ENCODE measurements at regions of chr16 and their contacts with region 1.

Region 1: GRCh38 chr16:30065143-30065850 is at the start of gene ALDOA:
- DNase-seq: peak; percentile 89 to 92
- H3K4me3 ChIP-seq: peak within 1 kb of the TSS; percentile 71 to 92 (median 88)
- H3K27ac ChIP-seq: peak within 1 kb of the TSS; percentile 84
- H3K4me1 ChIP-seq: peaks cover 6 to 27% (median 15%) of the 10 kb centered on the region in 4 experiments
- H3K27me3 ChIP-seq: no peaks in the 10 kb centered on the region
- CTCF ChIP-seq: no peak
- EP300 ChIP-seq: no peak; a peak in 1 of 3 replicates
- POLR2A ChIP-seq: peak; percentile 93 to 95
- RAD21 ChIP-seq: no peak
- total RNA-seq, gene ALDOA: 1,083 and 1,146 TPM in 2 replicates

Region 2: DNA sequence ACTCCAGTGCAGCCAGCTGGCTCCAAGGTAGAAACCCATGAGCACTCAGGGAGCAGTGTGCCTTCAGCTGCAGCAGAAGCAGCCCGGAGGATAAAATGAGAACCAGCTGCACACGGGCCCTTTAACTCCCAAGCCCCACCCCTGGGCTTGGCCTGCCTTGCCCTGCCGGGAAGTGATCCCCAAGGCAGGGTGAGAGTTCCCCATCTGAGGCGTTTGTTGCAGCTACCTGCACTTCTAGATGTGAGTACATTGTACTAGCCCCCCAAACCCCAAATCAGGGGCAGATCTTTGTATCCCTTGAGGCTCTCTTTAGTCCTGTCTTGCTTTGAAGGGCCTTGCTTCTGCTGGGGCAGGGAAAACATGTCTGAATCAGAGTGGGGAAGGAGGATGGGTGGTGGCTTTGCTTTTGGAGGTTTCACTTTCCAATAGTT is 245.0 kb before region 1 on chr16 and contains the start of gene MVP:
- CTCF ChIA-PET with region 1: no interaction called
- POLR2A ChIA-PET with region 1: no interaction called
- DNase-seq: peak in 1 of 2 experiments; percentile 39
- H3K4me3 ChIP-seq: no peak within 1 kb of the TSS; a peak in 1 of 8 replicates
- H3K27ac ChIP-seq: no peak within 1 kb of the TSS
- H3K4me1 ChIP-seq: peaks cover 0 to 7% (median 3%) of the 10 kb centered on the region in 4 experiments; a peak in 5 of 7 replicates
- H3K27me3 ChIP-seq: no peaks in the 10 kb centered on the region
- CTCF ChIP-seq: no peak
- EP300 ChIP-seq: no peak
- POLR2A ChIP-seq: no peak
- RAD21 ChIP-seq: no peak
- total RNA-seq, gene MVP: 1.9 and 2.9 TPM in 2 replicates

Region 3: GRCh38 chr16:30018731-30019158 is 46.6 kb before region 1 on chr16:
- CTCF ChIA-PET with region 1: no interaction called
- POLR2A ChIA-PET with region 1: no interaction called
- DNase-seq: no peak
- H3K4me3 ChIP-seq: no peak overlapping the region
- H3K27ac ChIP-seq: no peak overlapping the region
- H3K4me1 ChIP-seq: no peaks in the 10 kb centered on the region; a peak in 1 of 7 replicates
- H3K27me3 ChIP-seq: no peaks in the 10 kb centered on the region
- CTCF ChIP-seq: no peak
- EP300 ChIP-seq: no peak
- POLR2A ChIP-seq: no peak
- RAD21 ChIP-seq: no peak

Region 4: GRCh38 chr16:30052671-30053372 is 12.5 kb before region 1 on chr16:
- CTCF ChIA-PET with region 1: interaction called, 8 read pairs
- POLR2A ChIA-PET with region 1: interaction called, 88 read pairs
- DNase-seq: peak in 1 of 2 experiments; percentile 98
- H3K4me3 ChIP-seq: peak overlapping the region; percentile 68 to 80 (median 78)
- H3K27ac ChIP-seq: no peak overlapping the region
- H3K4me1 ChIP-seq: peaks cover 0 to 4% (median 2%) of the 10 kb centered on the region in 4 experiments; a peak in 3 of 7 replicates
- H3K27me3 ChIP-seq: peaks cover 0 to 5% (median 2%) of the 10 kb centered on the region in 4 experiments; a peak in 2 of 7 replicates
- CTCF ChIP-seq: no peak
- EP300 ChIP-seq: peak in 1 of 2 experiments; percentile 51; a peak in 1 of 3 replicates
- POLR2A ChIP-seq: no peak
- RAD21 ChIP-seq: no peak

Region 5: DNA sequence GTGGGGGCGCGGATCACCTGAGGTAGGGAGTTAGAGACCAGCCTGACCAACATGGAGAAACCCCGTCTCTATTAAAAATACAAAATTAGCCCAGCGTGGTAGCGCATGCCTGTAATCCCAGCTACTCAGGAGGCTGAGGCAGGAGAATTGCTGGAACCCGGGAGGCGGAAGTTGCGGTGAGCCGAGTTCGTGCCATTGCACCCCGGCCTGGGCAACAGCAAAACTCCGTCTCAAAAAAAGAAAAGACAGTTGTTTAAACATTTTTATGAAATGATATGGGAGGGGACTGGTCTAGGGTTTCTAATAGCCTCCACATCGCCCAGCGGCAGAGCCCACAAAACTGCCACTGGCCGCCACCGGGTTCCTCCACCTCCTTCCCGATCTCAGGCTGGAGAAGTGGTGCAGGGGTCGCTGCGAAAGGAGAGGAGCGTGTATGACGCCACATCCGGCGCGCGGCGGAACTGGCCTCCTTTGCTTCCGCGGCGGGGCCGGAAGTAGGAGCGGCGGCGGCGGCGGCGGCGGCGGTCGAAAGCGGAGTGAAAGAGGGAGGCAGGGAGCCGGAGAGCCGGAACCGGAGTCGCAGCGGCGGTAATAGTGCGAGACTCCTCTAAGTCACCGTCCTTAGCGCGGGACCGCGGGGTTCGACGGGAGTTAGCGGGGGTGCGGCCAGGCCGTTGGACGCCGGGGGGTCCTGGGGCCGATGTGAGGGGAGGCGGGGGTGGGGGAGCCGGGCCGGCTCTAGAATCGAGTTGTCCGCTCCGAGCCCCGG is 10.4 kb after region 1 on chr16 and contains the start of gene PPP4C:
- CTCF ChIA-PET with region 1: interaction called, 8 read pairs
- POLR2A ChIA-PET with region 1: interaction called, 151 read pairs
- DNase-seq: peak in 1 of 2 experiments; percentile 92
- H3K4me3 ChIP-seq: peak within 1 kb of the TSS; percentile 85 to 95 (median 90)
- H3K27ac ChIP-seq: peak within 1 kb of the TSS; percentile 41
- H3K4me1 ChIP-seq: peaks cover 0 to 7% (median 1%) of the 10 kb centered on the region in 4 experiments; a peak in 2 of 7 replicates
- H3K27me3 ChIP-seq: no peaks in the 10 kb centered on the region
- CTCF ChIP-seq: 0 out of 4 replicates have a peak, but pooled peaks of 1 of the 3 experiments have one; percentile 1
- EP300 ChIP-seq: peak in 1 of 2 experiments; percentile 88; a peak in 2 of 3 replicates
- POLR2A ChIP-seq: peak in 1 of 2 experiments; percentile 84; a peak in 2 of 3 replicates
- RAD21 ChIP-seq: no peak
- total RNA-seq, gene PPP4C: 148 TPM in 2 replicates

Region 6: GRCh38 chr16:30104494-30104968 is 39.2 kb after region 1 on chr16:
- CTCF ChIA-PET with region 1: no interaction called
- POLR2A ChIA-PET with region 1: interaction called, 12 read pairs
- DNase-seq: no peak
- H3K4me3 ChIP-seq: no peak overlapping the region
- H3K27ac ChIP-seq: no peak overlapping the region
- H3K4me1 ChIP-seq: no peaks in the 10 kb centered on the region
- H3K27me3 ChIP-seq: no peaks in the 10 kb centered on the region
- CTCF ChIP-seq: no peak
- EP300 ChIP-seq: no peak
- POLR2A ChIP-seq: peak in 1 of 2 experiments; percentile 52; a peak in 1 of 3 replicates
- RAD21 ChIP-seq: no peak

Region 7: GRCh38 chr16:30136971-30137605 is 71.8 kb after region 1 on chr16:
- CTCF ChIA-PET with region 1: no interaction called
- POLR2A ChIA-PET with region 1: no interaction called
- DNase-seq: no peak
- H3K4me3 ChIP-seq: no peak overlapping the region
- H3K27ac ChIP-seq: no peak overlapping the region
- H3K4me1 ChIP-seq: no peaks in the 10 kb centered on the region
- H3K27me3 ChIP-seq: no peaks in the 10 kb centered on the region; a peak in 2 of 7 replicates
- CTCF ChIP-seq: no peak
- EP300 ChIP-seq: no peak
- POLR2A ChIP-seq: no peak
- RAD21 ChIP-seq: no peak

Region 8: DNA sequence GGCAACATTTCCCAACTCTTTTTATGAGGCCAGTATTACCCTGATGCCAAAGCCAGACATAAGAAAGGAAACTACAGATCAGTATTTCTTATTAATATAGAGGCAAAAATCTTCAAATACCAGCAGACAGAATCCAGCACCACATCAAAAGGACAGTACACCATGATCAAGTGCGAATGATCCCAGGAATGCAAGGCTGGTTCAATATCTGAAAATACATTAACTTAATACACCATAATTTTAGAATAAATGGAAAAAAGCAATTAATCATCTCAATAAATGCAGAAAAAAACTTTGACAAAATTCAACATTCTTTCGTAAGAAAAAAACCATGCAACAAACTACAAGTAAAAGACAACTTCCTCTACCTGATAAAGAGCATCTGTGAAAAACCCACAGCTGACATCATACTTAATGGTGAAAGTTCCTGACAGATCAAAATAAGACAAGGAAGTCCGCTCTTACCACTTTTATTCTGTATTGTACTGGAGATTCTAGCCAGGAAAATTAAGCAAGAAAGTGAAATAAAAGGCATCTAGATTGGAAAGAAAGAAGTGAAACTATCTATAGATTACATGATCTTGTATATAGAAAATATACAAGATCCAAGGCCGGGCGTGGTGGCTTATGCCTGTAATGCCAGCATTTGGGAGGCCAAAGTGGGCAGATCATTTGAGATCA is 84.1 kb after region 1 on chr16:
- CTCF ChIA-PET with region 1: no interaction called
- POLR2A ChIA-PET with region 1: no interaction called
- DNase-seq: no peak
- H3K4me3 ChIP-seq: no peak overlapping the region
- H3K27ac ChIP-seq: no peak overlapping the region
- H3K4me1 ChIP-seq: no peaks in the 10 kb centered on the region
- H3K27me3 ChIP-seq: no peaks in the 10 kb centered on the region
- CTCF ChIP-seq: no peak
- EP300 ChIP-seq: no peak
- POLR2A ChIP-seq: no peak
- RAD21 ChIP-seq: no peak

Measured in H1 (cell line).